Activated CD4-positive, alpha-beta T cell treated with anti-CD3 and anti-CD28 coated beads, Interleukin-2, amount 10 ng/mL, durations not matched to agents 24 days and 14 days (primary cell): ENCODE measurements at regions of chr7 and their contacts with region 1.

Region 1: GRCh38 chr7:128209229-128210035 is 31.6 kb upstream of the LEP start:
- DNase-seq: peak; percentile 90
- H3K4me3 Mint-ChIP-seq: no peak overlapping the region
- H3K27ac Mint-ChIP-seq: no peak overlapping the region
- H3K4me1 Mint-ChIP-seq: no peaks in the 10 kb centered on the region
- H3K27me3 Mint-ChIP-seq: peaks cover 18% of the 10 kb centered on the region

Region 2: GRCh38 chr7:127504715-127505114 is 704.7 kb before region 1 on chr7:
- intact Hi-C with region 1: loop called (anchors 2 kb)
- DNase-seq: peak; percentile 70
- H3K4me3 Mint-ChIP-seq: no peak overlapping the region
- H3K27ac Mint-ChIP-seq: no peak overlapping the region
- H3K4me1 Mint-ChIP-seq: no peaks in the 10 kb centered on the region
- H3K27me3 Mint-ChIP-seq: peaks cover 36% of the 10 kb centered on the region

Region 3: DNA sequence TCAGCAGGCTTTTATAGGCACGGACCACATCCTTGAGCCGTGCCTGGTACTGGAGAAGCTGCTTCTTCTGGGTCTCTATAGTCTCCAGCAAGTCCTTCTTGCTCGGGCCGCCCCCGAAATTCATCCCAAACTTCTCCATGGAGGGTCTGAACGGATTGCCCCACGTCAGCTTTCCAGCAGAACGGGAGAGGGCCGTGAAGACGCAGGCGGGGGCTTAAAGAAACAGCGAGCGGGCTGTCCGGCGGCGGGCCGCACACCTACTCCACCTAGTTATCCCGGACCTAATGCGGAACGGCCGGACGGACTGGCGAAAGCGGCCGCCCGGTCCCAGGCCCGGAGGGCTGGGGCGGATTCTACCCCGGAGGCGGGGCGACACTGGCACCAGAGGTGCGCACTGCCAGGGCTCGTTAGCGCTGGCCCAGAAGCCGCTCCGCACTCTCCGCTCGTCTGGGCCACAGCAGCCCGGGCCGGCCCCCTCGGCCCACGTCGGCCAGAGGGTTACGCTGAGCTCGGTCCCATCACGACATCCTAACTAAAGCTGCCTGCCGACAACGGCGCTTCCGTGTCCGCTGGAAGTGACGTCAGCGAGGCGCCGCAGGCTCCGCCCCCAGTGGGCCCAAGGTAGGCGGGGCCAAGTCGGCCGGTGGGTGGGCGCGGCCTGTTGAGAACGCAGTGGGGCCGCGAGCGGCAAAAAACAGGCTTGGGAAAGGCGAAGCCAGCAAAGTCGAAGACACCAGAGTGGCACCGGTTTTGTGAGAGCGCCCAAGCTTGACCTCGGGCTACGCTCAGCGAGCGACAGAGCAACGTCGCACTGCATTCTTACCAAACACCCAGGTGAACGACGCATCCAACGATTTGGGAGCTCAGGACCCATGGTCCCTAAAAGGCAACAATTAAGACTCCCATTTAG is 624.1 kb before region 1 on chr7 and contains the start of gene GCC1:
- intact Hi-C with region 1: loop called (anchors 1 kb)
- DNase-seq: peak; percentile 99
- H3K4me3 Mint-ChIP-seq: peak within 1 kb of the TSS; percentile 94
- H3K27ac Mint-ChIP-seq: peak within 1 kb of the TSS; percentile 89
- H3K4me1 Mint-ChIP-seq: peaks cover 43% of the 10 kb centered on the region
- H3K27me3 Mint-ChIP-seq: no peaks in the 10 kb centered on the region
- total RNA-seq, gene GCC1: 14.8 and 15.6 TPM in 2 replicates

Region 4: DNA sequence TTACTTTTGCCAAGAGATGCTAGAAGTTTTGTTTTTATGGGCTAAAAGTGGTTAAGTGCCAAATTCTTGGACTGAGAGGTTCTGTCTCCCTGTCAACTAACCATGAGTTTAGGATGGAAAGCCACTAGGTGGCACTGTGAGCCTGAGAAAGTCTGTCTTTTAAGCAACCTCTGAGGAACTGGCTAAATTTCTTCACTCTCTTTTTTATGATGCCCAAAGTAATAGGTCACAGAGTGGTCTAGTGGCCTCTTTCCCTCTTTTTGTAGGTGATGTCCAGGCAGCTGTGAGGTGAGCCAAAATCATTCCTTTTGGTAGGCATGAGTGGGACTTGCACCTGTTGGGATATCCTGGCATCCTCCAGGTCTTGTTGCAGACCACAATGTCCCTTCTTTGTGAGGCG is 500.6 kb before region 1 on chr7:
- intact Hi-C with region 1: loop called (anchors 1 kb)
- DNase-seq: peak; percentile 92
- H3K4me3 Mint-ChIP-seq: no peak overlapping the region
- H3K27ac Mint-ChIP-seq: peak overlapping the region; percentile 51
- H3K4me1 Mint-ChIP-seq: peaks cover 5% of the 10 kb centered on the region
- H3K27me3 Mint-ChIP-seq: no peaks in the 10 kb centered on the region

Region 5: GRCh38 chr7:128135515-128136214 is 73.8 kb before region 1 on chr7:
- intact Hi-C with region 1: loop called (anchors 1 kb)
- DNase-seq: peak; percentile 91
- H3K4me3 Mint-ChIP-seq: peak overlapping the region; percentile 80
- H3K27ac Mint-ChIP-seq: peak overlapping the region; percentile 56
- H3K4me1 Mint-ChIP-seq: peaks cover 13% of the 10 kb centered on the region
- H3K27me3 Mint-ChIP-seq: peaks cover 46% of the 10 kb centered on the region